Dendritic cell treated with granulocyte-macrophage colony-stimulating factor and Interleukin-4, amounts not matched to agents 40 ng/mL and 50 ng/mL, for 4 days (primary cell): ENCODE measurements at regions of chr20 and their contacts with region 1.

Region 1: GRCh38 chr20:49278036-49278817 is at the start of gene ZNFX1:
- H3K4me3 Mint-ChIP-seq: peak within 1 kb of the TSS; percentile 96
- H3K27ac Mint-ChIP-seq: peak within 1 kb of the TSS; percentile 93
- H3K4me1 Mint-ChIP-seq: peaks cover 52% of the 10 kb centered on the region
- H3K27me3 Mint-ChIP-seq: no peaks in the 10 kb centered on the region

Region 2: DNA sequence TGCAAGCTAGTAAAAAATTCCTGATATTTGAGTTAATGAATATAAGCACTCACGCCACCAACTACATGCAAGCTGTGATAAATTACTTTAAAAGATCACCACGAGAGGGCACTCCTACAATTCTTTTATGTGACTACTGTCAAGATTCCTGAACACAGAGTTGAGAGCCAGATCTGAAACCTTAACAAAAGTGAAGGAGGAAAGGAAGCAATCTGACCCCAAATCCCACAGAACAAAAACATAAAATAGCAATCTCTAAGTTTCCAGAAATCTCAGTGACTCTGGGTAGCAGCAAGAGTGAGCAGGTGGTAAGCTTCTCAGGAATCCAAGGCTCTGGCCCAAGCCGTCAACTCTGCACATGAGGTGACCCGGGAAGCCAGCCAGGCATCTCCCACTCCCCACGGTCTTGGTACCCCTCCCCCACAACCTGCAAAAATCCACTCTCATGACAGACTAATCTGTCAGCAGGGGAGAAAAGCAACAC is 145.2 kb before region 1 on chr20:
- intact Hi-C with region 1: no loop called
- H3K4me3 Mint-ChIP-seq: no peak overlapping the region
- H3K27ac Mint-ChIP-seq: no peak overlapping the region
- H3K4me1 Mint-ChIP-seq: peaks cover 6% of the 10 kb centered on the region
- H3K27me3 Mint-ChIP-seq: no peaks in the 10 kb centered on the region

Region 3: DNA sequence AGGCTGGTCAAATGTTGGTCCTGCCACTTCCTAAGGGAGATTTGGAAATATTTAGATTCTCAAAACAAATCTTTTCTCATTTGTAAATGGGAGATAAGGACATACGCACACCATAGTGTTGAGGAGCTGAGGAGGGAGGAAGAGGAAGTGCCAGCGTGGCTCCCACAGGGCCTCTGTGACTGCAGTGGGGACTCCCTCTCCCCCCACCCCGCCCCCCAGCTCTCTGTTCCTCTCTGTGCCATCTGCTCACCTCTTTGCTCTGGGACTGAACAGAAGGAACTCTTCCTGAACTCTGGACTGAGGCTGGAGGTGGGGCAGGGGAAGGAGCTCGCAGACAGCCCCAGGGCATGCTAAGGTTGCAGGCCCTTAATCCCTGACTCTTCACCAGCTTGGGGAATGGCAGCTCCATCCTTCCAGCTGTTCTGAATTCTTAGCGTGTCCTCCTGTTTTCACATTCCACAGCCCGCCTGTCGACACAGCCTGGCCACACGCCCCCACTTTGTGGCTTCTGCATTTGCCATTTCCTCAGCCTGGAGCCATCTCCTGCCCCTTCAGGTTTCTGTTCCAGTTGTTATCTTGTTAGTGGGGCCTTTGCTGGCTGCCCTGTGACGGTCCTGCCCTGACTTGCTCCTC is 47.5 kb before region 1 on chr20:
- intact Hi-C with region 1: loop called (anchors 5 kb)
- H3K4me3 Mint-ChIP-seq: peak overlapping the region; percentile 65
- H3K27ac Mint-ChIP-seq: peak overlapping the region; percentile 95
- H3K4me1 Mint-ChIP-seq: peaks cover 33% of the 10 kb centered on the region
- H3K27me3 Mint-ChIP-seq: no peaks in the 10 kb centered on the region

Region 4: DNA sequence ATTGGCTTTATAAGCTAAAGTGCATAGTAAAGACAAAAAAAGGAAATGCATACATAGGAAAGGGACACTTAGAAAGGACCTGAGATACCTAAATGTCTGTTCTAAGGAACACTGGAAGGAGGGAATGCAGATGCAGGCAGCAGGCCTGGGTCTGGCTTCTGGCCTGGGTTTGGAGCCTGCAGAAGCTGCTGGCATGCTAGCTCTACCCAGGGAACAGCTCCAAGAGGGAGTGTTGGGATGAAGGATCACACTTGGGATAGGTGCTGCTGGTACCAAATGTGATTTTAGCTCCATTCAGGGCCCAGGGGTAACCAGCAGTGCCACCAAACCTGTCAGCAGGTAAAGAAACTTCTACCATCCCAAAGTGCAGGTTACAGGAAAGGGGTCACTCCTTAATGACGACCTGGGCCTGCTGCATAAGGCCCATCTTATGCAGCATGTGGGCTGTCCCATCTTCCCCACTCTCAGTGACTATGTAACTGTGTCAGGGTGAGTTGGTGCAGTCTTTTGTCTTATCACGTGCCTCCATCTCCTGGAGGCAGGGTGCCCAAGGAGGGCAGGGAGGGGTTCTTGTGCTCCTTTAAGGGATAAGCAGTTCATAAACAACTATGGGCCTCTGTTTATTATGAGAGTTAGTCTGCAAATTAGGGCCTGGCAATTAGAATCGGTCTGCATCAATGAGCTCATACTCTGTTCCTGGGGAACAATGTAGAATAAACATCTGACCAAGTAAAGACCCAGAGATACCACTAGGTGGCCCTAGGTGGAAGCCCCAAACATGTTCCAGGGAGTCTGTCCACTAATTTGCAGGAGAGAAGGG is 32.1 kb before region 1 on chr20:
- intact Hi-C with region 1: no loop called
- H3K4me3 Mint-ChIP-seq: no peak overlapping the region
- H3K27ac Mint-ChIP-seq: no peak overlapping the region
- H3K4me1 Mint-ChIP-seq: peaks cover 8% of the 10 kb centered on the region
- H3K27me3 Mint-ChIP-seq: no peaks in the 10 kb centered on the region

Region 5: GRCh38 chr20:49323622-49324238 is 45.5 kb after region 1 on chr20:
- intact Hi-C with region 1: loop called (anchors 5 kb)
- H3K4me3 Mint-ChIP-seq: no peak overlapping the region
- H3K27ac Mint-ChIP-seq: peak overlapping the region; percentile 62
- H3K4me1 Mint-ChIP-seq: peaks cover 38% of the 10 kb centered on the region
- H3K27me3 Mint-ChIP-seq: peaks cover 41% of the 10 kb centered on the region